CD8-positive, alpha-beta T cell (primary cell): ENCODE measurements at regions of chr6 and their contacts with region 1.

Region 1: GRCh38 chr6:158869826-158870648 is 50.9 kb upstream of the EZR start:
- DNase-seq: peak in 5 of 9 experiments; percentile 63 to 99 (median 94)
- ATAC-seq: peak; percentile 75
- H3K4me3 ChIP-seq: peak overlapping the region; percentile 57 to 61
- H3K4me3 Mint-ChIP-seq: peak overlapping the region; percentile 89
- H3K27ac ChIP-seq: peak overlapping the region; percentile 86 to 98
- H3K27ac Mint-ChIP-seq: peak overlapping the region; percentile 99
- H3K4me1 ChIP-seq: peaks cover 20% of the 10 kb centered on the region
- H3K4me1 Mint-ChIP-seq: peaks cover 34% of the 10 kb centered on the region
- H3K27me3 ChIP-seq: no peaks in the 10 kb centered on the region
- H3K27me3 Mint-ChIP-seq: no peaks in the 10 kb centered on the region
- CTCF ChIP-seq: no peak

Region 2: GRCh38 chr6:157021344-157021992 is 1848.6 kb before region 1 on chr6:
- CTCF ChIA-PET with region 1: no interaction called
- POLR2A ChIA-PET with region 1: no interaction called
- intact Hi-C with region 1: loop called in 1 of 2 experiments (anchors 5 kb)
- DNase-seq: peak; percentile 75 to 93 (median 89)
- ATAC-seq: peak; percentile 75
- H3K4me3 ChIP-seq: peak overlapping the region; percentile 66 to 93
- H3K4me3 Mint-ChIP-seq: peak overlapping the region; percentile 95
- H3K27ac ChIP-seq: peak overlapping the region; percentile 96 to 98
- H3K27ac Mint-ChIP-seq: peak overlapping the region; percentile 100
- H3K4me1 ChIP-seq: peaks cover 8% of the 10 kb centered on the region
- H3K4me1 Mint-ChIP-seq: peaks cover 59% of the 10 kb centered on the region
- H3K27me3 ChIP-seq: no peaks in the 10 kb centered on the region
- H3K27me3 Mint-ChIP-seq: no peaks in the 10 kb centered on the region
- CTCF ChIP-seq: no peak

Region 3: GRCh38 chr6:158644231-158645063 is 225.6 kb before region 1 on chr6 and contains the start of gene DYNLT1:
- CTCF ChIA-PET with region 1: no interaction called
- POLR2A ChIA-PET with region 1: interaction called, 3 read pairs
- intact Hi-C with region 1: loop called in 1 of 2 experiments (anchors 5 kb)
- DNase-seq: peak; percentile 77 to 92 (median 85)
- ATAC-seq: peak; percentile 67
- H3K4me3 ChIP-seq: peak within 1 kb of the TSS; percentile 77 to 84
- H3K4me3 Mint-ChIP-seq: peak within 1 kb of the TSS; percentile 97
- H3K27ac ChIP-seq: peak within 1 kb of the TSS; percentile 93 to 94
- H3K27ac Mint-ChIP-seq: peak within 1 kb of the TSS; percentile 96
- H3K4me1 ChIP-seq: peaks cover 49% of the 10 kb centered on the region
- H3K4me1 Mint-ChIP-seq: peaks cover 63% of the 10 kb centered on the region
- H3K27me3 ChIP-seq: no peaks in the 10 kb centered on the region
- H3K27me3 Mint-ChIP-seq: no peaks in the 10 kb centered on the region
- CTCF ChIP-seq: no peak
- total RNA-seq, gene DYNLT1: 109 TPM

Region 4: GRCh38 chr6:158793432-158793831 is 76.6 kb before region 1 on chr6:
- CTCF ChIA-PET with region 1: interaction called, 4 read pairs
- POLR2A ChIA-PET with region 1: interaction called, 31 read pairs
- intact Hi-C with region 1: no loop called
- DNase-seq: peak in 2 of 9 experiments; percentile 59 to 70
- ATAC-seq: peak; percentile 22
- H3K4me3 ChIP-seq: no peak overlapping the region
- H3K4me3 Mint-ChIP-seq: peak overlapping the region; percentile 32
- H3K27ac ChIP-seq: peak overlapping the region in 1 of 2 experiments; percentile 32
- H3K27ac Mint-ChIP-seq: peak overlapping the region; percentile 45
- H3K4me1 ChIP-seq: peaks cover 73% of the 10 kb centered on the region
- H3K4me1 Mint-ChIP-seq: peaks cover 81% of the 10 kb centered on the region
- H3K27me3 ChIP-seq: no peaks in the 10 kb centered on the region
- H3K27me3 Mint-ChIP-seq: no peaks in the 10 kb centered on the region
- CTCF ChIP-seq: peak; percentile 36

Region 5: DNA sequence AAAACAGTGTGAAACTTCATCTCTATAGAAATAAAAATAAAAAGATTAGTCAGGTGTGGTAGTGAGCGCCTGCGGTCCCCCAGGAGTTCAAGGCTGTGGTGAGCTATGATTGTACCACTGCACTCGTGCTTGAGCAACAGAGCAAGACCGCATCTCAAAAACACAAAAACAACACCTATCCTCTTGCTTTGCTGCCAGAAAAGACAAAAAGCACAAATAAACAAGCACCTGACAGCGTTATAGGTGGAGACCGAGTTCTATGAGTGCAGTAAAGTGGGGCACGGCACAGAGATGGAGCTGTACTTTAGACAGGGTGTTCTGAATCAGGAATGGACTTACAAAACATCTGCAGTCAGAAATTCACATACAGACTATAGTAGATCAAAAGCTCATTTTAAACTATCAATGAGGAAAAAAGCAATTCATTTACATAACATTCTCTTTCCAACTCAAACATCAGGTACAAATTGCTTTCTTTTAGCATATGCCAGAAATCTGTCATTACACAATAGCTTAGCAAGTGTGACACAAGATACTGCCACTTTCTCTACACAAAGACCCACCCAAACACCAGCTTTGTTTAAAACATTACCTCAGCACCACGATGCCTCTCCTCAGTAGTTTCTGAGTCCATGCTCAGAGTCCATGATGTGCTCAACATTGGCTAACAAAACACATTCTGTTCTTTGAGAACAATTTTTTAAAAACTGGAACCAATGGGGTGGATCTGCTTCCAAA is 60.9 kb before region 1 on chr6:
- CTCF ChIA-PET with region 1: interaction called, 5 read pairs
- POLR2A ChIA-PET with region 1: interaction called, 18 read pairs
- intact Hi-C with region 1: no loop called
- DNase-seq: peak in 5 of 9 experiments; percentile 44 to 76 (median 68)
- ATAC-seq: peak; percentile 71
- H3K4me3 ChIP-seq: no peak overlapping the region
- H3K4me3 Mint-ChIP-seq: peak overlapping the region; percentile 61
- H3K27ac ChIP-seq: peak overlapping the region in 1 of 2 experiments; percentile 46
- H3K27ac Mint-ChIP-seq: peak overlapping the region; percentile 91
- H3K4me1 ChIP-seq: peaks cover 92% of the 10 kb centered on the region
- H3K4me1 Mint-ChIP-seq: peaks cover 96% of the 10 kb centered on the region
- H3K27me3 ChIP-seq: no peaks in the 10 kb centered on the region
- H3K27me3 Mint-ChIP-seq: no peaks in the 10 kb centered on the region
- CTCF ChIP-seq: no peak

Region 6: GRCh38 chr6:158853072-158853871 is 16.8 kb before region 1 on chr6:
- CTCF ChIA-PET with region 1: interaction called, 4 read pairs
- POLR2A ChIA-PET with region 1: interaction called, 115 read pairs
- intact Hi-C with region 1: loop called (anchors 1 kb)
- DNase-seq: peak; percentile 75 to 95 (median 88)
- ATAC-seq: peak; percentile 74
- H3K4me3 ChIP-seq: peak overlapping the region; percentile 7 to 52
- H3K4me3 Mint-ChIP-seq: no peak overlapping the region
- H3K27ac ChIP-seq: peak overlapping the region; percentile 77 to 98
- H3K27ac Mint-ChIP-seq: no peak overlapping the region
- H3K4me1 ChIP-seq: peaks cover 58% of the 10 kb centered on the region
- H3K4me1 Mint-ChIP-seq: peaks cover 44% of the 10 kb centered on the region
- H3K27me3 ChIP-seq: no peaks in the 10 kb centered on the region
- H3K27me3 Mint-ChIP-seq: no peaks in the 10 kb centered on the region
- CTCF ChIP-seq: no peak

Region 7: GRCh38 chr6:158958504-158959386 is 88.7 kb after region 1 on chr6:
- CTCF ChIA-PET with region 1: interaction called, 3 read pairs
- POLR2A ChIA-PET with region 1: no interaction called
- intact Hi-C with region 1: loop called in 1 of 2 experiments (anchors 10 kb)
- DNase-seq: peak in 5 of 9 experiments; percentile 21 to 47 (median 35)
- ATAC-seq: peak; percentile 65
- H3K4me3 ChIP-seq: no peak overlapping the region
- H3K4me3 Mint-ChIP-seq: no peak overlapping the region
- H3K27ac ChIP-seq: no peak overlapping the region
- H3K27ac Mint-ChIP-seq: no peak overlapping the region
- H3K4me1 ChIP-seq: no peaks in the 10 kb centered on the region
- H3K4me1 Mint-ChIP-seq: no peaks in the 10 kb centered on the region
- H3K27me3 ChIP-seq: no peaks in the 10 kb centered on the region
- H3K27me3 Mint-ChIP-seq: no peaks in the 10 kb centered on the region
- CTCF ChIP-seq: peak; percentile 21